MCF 10A (cell line): ENCODE measurements at regions of chr18 and their contacts with region 1.

Region 1: GRCh38 chr18:3665780-3666525 is 216.0 kb downstream of the TGIF1 start:
- DNase-seq: peak; percentile 91
- H3K4me3 Mint-ChIP-seq: no peak overlapping the region
- H3K27ac Mint-ChIP-seq: peak overlapping the region; percentile 72
- H3K4me1 Mint-ChIP-seq: peaks cover 15% of the 10 kb centered on the region
- H3K27me3 Mint-ChIP-seq: no peaks in the 10 kb centered on the region
- CTCF ChIP-seq: peak; percentile 91

Region 2: DNA sequence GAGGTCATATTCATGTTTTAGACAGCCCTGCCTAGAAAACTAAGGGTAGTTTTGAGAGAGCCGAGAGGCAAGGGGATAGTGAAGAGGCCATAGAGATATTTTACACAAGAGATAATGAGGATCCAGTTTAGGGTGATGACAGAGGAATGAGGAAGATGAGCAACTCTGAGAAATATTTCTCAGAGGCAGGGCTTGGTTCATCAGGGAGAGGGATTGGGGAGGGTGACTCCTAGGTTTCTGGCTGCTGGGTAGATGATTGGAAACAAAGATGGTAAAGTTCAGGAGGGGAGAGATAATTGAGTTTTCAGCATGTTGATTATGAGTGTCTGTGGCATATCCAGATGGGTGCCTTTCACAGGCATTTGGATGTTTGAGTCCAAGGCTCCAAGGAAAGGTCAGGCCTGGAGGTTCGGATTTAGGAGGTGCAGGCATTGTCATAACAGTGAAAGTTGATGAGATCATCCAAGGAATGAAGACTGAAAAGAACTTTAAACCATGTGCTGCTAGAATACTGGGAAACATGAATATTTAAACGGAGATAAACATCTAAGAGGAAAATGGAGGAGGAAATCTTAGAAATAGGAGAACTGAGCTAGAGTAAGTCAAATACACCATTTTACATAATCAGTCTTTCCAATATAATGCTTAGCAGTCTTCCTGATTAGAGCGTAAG is 396.6 kb before region 1 on chr18:
- CTCF ChIA-PET with region 1: interaction called, 15 read pairs
- POLR2A ChIA-PET with region 1: interaction called, 10 read pairs
- intact Hi-C with region 1: no loop called
- DNase-seq: no peak
- H3K4me3 Mint-ChIP-seq: peak overlapping the region; percentile 4
- H3K27ac Mint-ChIP-seq: peak overlapping the region; percentile 16
- H3K4me1 Mint-ChIP-seq: peaks cover 61% of the 10 kb centered on the region
- H3K27me3 Mint-ChIP-seq: no peaks in the 10 kb centered on the region
- CTCF ChIP-seq: no peak

Region 3: DNA sequence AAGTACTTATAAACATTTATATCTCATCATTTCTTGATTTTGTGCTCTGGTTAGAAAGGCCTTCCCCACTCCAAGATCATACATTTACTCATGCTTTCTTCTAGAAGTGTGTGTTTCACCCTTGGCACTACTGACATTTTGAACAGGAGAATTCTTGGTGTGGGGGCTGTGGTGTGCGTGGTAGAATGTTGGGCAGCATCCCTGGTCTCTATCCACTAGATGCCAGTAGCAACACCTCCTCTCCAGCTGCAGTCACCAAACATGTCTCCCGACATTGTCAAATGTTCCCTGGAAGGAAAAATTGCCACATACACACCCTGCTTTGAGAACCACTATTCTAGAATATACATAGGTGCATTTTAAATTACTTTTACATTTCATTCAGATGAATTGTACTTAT is 224.7 kb before region 1 on chr18:
- CTCF ChIA-PET with region 1: interaction called, 11 read pairs
- POLR2A ChIA-PET with region 1: interaction called, 5 read pairs
- intact Hi-C with region 1: no loop called
- DNase-seq: peak; percentile 47
- H3K4me3 Mint-ChIP-seq: no peak overlapping the region
- H3K27ac Mint-ChIP-seq: no peak overlapping the region
- H3K4me1 Mint-ChIP-seq: peaks cover 5% of the 10 kb centered on the region
- H3K27me3 Mint-ChIP-seq: no peaks in the 10 kb centered on the region
- CTCF ChIP-seq: no peak

Region 4: DNA sequence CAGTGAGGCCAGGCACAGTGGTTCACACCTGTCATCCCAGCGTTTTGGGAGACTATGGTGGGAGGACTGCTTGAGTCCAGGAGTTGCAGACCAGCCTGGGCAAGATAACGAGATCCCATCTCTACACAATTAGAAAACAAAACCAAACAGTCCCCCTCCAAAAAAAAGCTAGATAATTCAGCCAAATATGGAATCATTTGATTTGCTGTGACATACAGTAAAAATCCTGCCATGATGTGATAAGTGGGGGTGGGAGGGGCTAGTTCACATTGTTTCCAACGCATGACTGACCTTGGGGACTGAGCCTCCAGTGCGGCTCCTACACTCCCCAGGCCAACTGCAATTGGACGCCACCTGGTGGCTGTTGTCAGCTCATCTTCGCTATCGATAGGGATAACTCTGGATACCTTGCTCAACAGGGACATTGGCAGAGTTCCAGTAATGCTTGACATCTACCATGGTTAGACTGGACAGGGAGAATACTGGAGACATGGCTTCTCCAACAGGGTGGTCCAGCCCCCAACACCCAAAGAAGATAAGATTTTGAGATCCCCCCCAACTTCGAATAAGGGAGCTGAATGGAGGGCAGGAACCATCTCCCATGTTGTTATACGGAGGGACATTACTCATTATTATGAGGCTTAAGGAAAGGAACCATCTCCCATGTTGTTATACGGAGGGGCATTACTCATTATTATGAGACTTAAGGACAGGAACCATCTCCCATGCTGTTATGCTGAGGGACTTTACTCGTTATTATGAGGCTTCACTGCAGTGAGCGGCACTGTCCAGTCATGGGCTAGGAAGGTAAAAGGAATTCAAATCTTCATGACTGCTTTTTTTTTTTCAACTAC is 80.1 kb before region 1 on chr18:
- CTCF ChIA-PET with region 1: interaction called, 38 read pairs
- POLR2A ChIA-PET with region 1: interaction called, 17 read pairs
- intact Hi-C with region 1: no loop called
- DNase-seq: peak; percentile 90
- H3K4me3 Mint-ChIP-seq: no peak overlapping the region
- H3K27ac Mint-ChIP-seq: no peak overlapping the region
- H3K4me1 Mint-ChIP-seq: peaks cover 14% of the 10 kb centered on the region
- H3K27me3 Mint-ChIP-seq: no peaks in the 10 kb centered on the region
- CTCF ChIP-seq: peak; percentile 64

Region 5: GRCh38 chr18:3623769-3624545 is 42.0 kb before region 1 on chr18:
- CTCF ChIA-PET with region 1: interaction called, 20 read pairs
- POLR2A ChIA-PET with region 1: interaction called, 61 read pairs
- intact Hi-C with region 1: loop called (anchors 1 kb)
- DNase-seq: peak; percentile 95
- H3K4me3 Mint-ChIP-seq: peak overlapping the region; percentile 74
- H3K27ac Mint-ChIP-seq: peak overlapping the region; percentile 99
- H3K4me1 Mint-ChIP-seq: peaks cover 35% of the 10 kb centered on the region
- H3K27me3 Mint-ChIP-seq: no peaks in the 10 kb centered on the region
- CTCF ChIP-seq: no peak

Region 6: DNA sequence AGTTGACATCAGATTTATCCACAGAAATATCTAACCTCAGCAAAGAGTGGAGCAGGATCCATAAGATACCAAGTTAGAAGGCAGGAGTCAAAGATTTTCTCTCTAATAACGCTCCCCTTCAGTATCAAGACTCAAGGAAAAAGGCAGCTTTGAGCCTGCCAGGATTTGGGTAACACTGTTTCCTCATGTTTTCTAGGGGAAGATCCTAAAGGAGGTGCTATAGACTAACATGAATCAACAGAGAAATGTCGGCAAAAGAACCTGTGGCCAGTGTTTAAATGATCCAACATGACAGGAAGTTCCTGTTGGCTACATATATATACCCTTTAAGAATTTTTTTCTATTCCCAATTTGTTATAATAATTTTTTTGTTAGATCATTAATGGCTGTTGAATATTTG is 186.4 kb after region 1 on chr18:
- CTCF ChIA-PET with region 1: no interaction called
- POLR2A ChIA-PET with region 1: no interaction called
- intact Hi-C with region 1: no loop called
- DNase-seq: no peak
- H3K4me3 Mint-ChIP-seq: no peak overlapping the region
- H3K27ac Mint-ChIP-seq: no peak overlapping the region
- H3K4me1 Mint-ChIP-seq: peaks cover 8% of the 10 kb centered on the region
- H3K27me3 Mint-ChIP-seq: no peaks in the 10 kb centered on the region
- CTCF ChIP-seq: no peak